ENCODE measurements at regions of chr9 and their contacts with region 1.

Region 1: DNA sequence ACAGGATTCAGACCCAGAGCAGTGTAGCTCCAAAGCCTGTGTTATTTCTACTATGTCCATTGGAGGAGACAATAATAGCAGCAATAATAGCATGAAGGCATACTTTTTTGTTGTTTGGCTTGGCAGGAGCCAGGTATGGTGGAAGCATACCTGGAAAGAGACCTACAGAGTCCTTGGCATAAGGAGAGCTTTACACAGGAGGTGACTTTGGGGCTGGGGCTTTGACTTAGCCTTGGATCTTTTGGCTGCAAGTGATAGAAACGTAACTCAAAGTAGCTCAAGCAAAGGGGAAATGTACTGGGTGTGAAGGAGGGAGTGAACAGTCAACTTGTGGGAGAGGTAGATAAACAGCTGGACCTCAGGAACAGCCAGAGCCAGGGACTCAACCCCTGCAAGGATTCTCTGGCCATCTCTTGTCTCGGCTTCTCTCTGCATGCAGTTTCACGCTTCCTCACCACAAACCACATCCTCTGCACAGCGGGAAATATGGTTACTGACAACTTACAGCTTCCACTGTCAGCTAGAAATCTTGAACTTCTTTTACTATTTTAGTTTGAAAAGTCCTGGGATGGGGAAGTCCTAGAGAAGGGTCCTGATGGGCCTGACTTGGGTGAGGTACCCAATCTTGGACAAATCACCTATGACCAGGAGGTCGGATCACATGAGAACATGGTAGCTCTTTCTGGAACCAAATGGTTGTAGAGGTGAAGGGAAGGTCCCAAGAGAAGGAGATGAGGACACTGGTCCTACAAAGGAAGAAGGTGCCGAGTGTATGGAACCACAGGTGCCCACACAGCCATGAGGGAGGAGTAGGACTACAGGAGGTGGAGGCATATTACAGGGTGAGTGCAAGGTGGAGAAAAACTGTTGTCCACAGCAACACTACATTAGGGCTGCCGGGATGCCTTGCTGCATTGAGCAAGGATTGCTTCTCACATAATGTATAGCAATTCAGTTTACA is 47.0 kb upstream of the TGFBR1 start:
- DNase-seq: peak; percentile 94
- H3K4me3 Mint-ChIP-seq: peak overlapping the region; percentile 77
- H3K27ac Mint-ChIP-seq: peak overlapping the region; percentile 82
- H3K4me1 Mint-ChIP-seq: peaks cover 68% of the 10 kb centered on the region
- H3K27me3 Mint-ChIP-seq: no peaks in the 10 kb centered on the region

Region 2: GRCh38 chr9:98998441-98999151 is 59.3 kb before region 1 on chr9:
- intact Hi-C with region 1: loop called (anchors 5 kb)
- DNase-seq: peak; percentile 90
- H3K4me3 Mint-ChIP-seq: no peak overlapping the region
- H3K27ac Mint-ChIP-seq: no peak overlapping the region
- H3K4me1 Mint-ChIP-seq: peaks cover 38% of the 10 kb centered on the region
- H3K27me3 Mint-ChIP-seq: peaks cover 24% of the 10 kb centered on the region

Region 3: DNA sequence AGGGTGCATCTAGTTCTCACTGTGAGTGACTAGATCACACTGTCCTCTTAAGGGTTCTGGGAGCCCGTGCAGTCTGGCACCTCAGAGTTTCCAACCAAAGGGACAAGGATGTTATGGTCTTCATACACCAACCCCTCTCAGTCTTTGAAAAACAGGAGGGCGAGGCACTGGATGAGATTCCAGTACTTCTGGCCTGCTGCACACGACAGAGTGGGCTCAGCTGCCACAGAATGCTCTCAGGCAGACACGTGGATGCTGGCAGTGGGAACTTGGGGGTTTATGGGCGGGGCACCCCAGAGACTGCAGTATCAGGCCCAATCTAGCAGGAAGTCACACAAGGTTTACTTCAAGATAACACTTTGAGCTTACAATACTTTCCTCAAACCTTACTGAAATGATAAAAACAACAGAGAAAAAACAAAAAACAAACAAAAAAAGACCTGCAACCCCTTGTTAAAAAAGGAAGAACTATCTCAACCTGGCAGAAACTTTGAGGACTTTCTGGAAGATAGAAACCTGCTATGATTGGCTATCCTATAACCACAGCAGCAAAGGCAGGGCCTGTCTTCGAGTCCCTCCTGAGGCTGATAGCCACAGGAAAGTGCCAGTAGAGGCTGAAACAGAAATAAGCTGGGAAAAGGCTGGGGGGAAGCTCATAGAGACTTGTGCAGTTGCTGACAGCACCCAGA is 18.7 kb after region 1 on chr9:
- intact Hi-C with region 1: loop called (anchors 2 kb)
- DNase-seq: peak; percentile 84
- H3K4me3 Mint-ChIP-seq: peak overlapping the region; percentile 70
- H3K27ac Mint-ChIP-seq: peak overlapping the region; percentile 90
- H3K4me1 Mint-ChIP-seq: peaks cover 41% of the 10 kb centered on the region
- H3K27me3 Mint-ChIP-seq: no peaks in the 10 kb centered on the region

Region 4: GRCh38 chr9:99104459-99105151 is 46.7 kb after region 1 on chr9 and contains the start of gene TGFBR1:
- intact Hi-C with region 1: loop called (anchors 1 kb)
- DNase-seq: peak; percentile 99
- H3K4me3 Mint-ChIP-seq: peak within 1 kb of the TSS; percentile 90
- H3K27ac Mint-ChIP-seq: peak within 1 kb of the TSS; percentile 84
- H3K4me1 Mint-ChIP-seq: peaks cover 53% of the 10 kb centered on the region
- H3K27me3 Mint-ChIP-seq: no peaks in the 10 kb centered on the region
- total RNA-seq, gene TGFBR1: 29.7 and 35.3 TPM in 2 replicates

Region 5: GRCh38 chr9:99150451-99151171 is 92.7 kb after region 1 on chr9:
- intact Hi-C with region 1: no loop called
- DNase-seq: peak; percentile 68
- H3K4me3 Mint-ChIP-seq: no peak overlapping the region
- H3K27ac Mint-ChIP-seq: no peak overlapping the region
- H3K4me1 Mint-ChIP-seq: peaks cover 20% of the 10 kb centered on the region
- H3K27me3 Mint-ChIP-seq: peaks cover 3% of the 10 kb centered on the region

Region 6: DNA sequence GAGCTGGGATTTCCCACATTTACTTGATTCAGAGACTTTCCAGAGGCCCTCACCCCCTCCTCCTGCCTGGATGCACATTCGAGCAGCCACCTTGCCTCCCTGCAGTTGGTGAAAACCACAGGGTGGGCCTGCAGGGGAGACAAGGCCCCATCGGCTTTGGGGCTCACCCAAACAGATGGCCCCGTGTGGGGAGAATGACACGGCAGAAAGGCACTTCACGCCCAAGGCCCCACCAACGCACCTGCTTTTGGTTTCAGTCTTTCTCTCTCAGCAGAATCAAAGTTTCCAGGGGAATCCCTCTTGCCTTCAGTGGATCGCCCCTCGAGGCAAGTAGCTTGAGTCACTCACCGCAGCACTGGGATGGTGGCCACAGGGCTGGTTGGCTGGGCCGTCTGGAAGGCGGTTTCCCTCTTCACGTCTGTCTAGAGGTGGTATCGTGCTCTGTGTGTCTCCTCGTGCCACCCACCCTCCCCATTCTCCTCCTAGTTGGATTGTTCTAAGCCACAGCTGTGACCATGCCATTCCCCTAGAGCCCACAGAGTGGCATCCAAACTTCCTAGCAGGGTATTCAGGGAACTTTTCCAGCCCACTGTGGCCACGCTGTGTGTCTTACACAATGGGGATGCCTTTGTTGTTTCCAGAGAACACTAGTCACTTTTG is 196.0 kb after region 1 on chr9:
- intact Hi-C with region 1: loop called (anchors 5 kb)
- DNase-seq: peak; percentile 93
- H3K4me3 Mint-ChIP-seq: peak overlapping the region; percentile 70
- H3K27ac Mint-ChIP-seq: peak overlapping the region; percentile 97
- H3K4me1 Mint-ChIP-seq: peaks cover 50% of the 10 kb centered on the region
- H3K27me3 Mint-ChIP-seq: no peaks in the 10 kb centered on the region